GM10248 (cell line): ENCODE measurements at regions of chr13 and their contacts with region 1.

Region 1: DNA sequence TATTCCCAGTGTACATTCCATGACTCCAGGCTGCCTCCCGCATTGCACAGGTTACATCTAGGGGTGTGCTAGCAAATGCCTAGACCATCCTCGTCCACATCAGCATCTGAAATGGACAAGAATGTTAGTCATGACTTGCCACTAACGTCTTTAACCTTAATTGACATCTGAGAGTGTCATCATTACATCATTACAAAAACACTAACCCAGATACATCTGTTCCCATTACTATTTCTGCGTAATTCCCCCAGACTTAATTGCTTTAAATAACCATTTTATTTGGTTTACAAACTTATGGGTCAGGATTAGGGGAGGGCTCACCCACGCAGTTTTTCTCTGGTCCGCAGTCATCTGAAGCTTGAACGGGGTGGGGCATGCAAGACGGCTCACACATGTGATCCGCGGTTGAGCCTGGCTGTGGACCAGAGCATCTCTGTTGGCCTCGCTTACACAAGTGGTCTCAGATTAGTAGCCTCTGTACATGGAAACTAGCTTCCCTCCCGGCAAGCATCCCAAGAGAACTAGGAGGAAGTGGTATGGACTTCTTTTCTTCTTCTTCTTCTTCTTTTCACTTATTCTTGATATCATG is 15.9 kb downstream of the KL start:
- DNase-seq: no peak
- CTCF ChIP-seq: no peak

Region 2: DNA sequence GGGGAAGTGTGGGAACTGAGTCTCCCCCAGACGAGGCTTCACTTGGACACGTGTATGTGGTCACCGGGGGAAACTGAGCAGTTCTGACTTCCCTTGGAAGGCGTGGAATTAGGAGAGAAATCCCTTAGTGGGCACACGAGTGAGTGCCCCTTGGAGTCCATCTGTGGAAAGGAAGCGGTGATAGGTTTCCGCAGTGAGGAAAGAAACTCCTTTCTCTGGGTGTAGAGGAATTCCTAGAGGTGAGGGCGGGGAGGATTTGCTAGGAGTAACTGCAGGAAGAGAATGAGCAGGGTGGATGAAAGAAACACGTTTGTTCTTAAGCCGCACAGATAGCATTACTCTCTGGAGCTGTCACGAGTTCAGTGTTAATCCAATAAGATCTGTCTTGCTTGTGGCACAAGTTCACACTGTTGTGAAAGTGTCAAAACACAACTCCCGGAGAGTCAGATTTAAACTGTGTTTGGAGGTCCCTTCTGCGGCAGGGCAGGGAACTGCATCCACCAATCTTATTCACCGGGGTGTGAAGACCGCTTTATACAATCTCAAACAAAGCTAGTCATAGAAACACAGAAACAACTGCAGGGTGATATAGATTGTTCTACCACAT is 14.7 kb before region 1 on chr13:
- CTCF ChIA-PET with region 1: interaction called, 13 read pairs
- POLR2A ChIA-PET with region 1: no interaction called
- DNase-seq: peak; percentile 72
- CTCF ChIP-seq: peak; percentile 61

Region 3: DNA sequence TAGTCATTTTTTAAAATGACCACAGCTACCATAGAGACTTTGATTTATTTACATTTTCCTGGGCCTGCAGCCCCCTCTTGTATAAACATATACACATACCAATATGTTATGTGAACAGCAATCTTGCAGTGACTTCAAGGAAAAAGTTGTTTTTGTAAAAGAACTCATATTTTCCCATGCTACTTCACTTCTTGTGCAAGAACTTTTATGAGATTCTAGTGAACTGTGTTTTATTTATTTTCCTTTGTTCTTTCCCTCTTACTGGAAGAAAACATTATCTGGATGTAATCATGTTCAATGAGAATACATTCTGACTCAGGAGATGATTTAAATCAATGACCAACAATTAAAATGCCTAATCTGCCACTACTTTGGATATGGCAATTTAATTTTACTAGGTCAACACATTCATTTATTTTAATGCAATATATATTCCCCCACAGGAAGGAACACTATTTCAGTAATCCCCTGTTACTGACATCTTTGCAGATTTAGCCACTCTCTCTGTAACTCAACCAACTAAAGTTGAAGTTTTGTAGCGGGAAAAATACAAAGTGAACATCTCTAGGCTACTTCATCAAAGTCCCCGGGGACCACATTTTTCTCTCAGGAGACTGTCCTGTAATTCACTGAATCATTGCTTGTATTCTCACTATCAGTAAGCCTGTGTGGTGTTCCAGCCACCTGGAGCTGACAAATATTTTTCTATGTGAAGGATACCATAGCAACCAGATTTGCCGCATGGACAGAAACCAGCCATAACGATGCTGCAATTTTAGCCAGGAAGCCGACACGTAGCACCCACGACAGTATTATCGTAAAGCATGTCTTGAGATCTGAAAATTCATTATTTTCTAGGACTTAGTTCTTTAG is 162.9 kb after region 1 on chr13:
- CTCF ChIA-PET with region 1: no interaction called
- POLR2A ChIA-PET with region 1: no interaction called
- DNase-seq: peak; percentile 63
- CTCF ChIP-seq: no peak